Ovary (tissue), 10 donors: ENCODE measurements at regions of chr10 and their contacts with region 1.

Region 1: DNA sequence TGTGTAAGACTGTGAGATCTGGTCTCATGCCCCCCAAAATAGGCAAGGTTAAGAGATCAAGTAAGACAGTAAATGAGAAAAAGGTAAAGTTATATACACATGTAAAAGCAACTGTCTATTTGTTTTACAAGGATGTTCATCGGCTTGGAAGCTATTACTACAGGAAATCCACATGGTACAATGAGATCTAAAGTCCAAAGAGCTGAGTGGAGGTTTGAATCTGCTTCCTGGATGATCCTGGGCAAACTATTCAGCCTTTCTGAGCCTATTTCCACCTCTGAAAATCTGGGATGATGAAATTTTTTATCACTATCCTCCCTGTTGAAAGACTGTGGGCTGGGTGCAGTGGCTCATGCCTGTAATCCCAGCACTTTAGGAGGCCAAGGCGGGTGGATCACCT is 123.0 kb downstream of the IDE start:
- DNase-seq: no peak
- H3K4me3 ChIP-seq: no peak overlapping the region
- H3K27ac ChIP-seq: no peak overlapping the region
- H3K4me1 ChIP-seq: no peaks in the 10 kb centered on the region
- H3K27me3 ChIP-seq: no peaks in the 10 kb centered on the region
- CTCF ChIP-seq: no peak
- EP300 ChIP-seq: no peak
- POLR2A ChIP-seq: no peak

Region 2: DNA sequence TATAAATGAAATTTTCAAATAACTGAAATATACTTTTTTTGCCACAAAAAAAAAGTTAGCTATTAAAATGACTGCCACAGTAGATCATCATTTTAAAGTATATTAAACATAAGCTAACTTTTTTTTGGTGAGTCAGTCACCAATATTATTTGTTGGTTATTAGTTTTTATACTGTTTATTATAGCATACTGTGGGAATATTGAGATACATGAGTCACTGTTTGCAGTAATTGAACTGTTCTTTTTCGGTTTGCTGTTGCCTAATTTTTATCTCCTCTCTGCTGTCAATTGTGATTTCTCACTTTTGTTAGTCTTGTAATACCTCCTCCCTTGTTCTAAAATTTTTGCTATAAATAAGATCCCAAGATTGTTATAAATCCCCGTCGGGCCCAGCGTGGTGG is 481.6 kb before region 1 on chr10:
- intact Hi-C with region 1: loop called in 1 of 4 experiments (anchors 10 kb)
- DNase-seq: no peak
- H3K4me3 ChIP-seq: no peak overlapping the region
- H3K27ac ChIP-seq: no peak overlapping the region
- H3K4me1 ChIP-seq: no peaks in the 10 kb centered on the region
- H3K27me3 ChIP-seq: no peaks in the 10 kb centered on the region
- CTCF ChIP-seq: no peak
- EP300 ChIP-seq: no peak
- POLR2A ChIP-seq: no peak

Region 3: GRCh38 chr10:92381543-92381954 is 69.3 kb before region 1 on chr10:
- intact Hi-C with region 1: no loop called
- DNase-seq: no peak
- H3K4me3 ChIP-seq: no peak overlapping the region
- H3K27ac ChIP-seq: no peak overlapping the region
- H3K4me1 ChIP-seq: no peaks in the 10 kb centered on the region
- H3K27me3 ChIP-seq: no peaks in the 10 kb centered on the region
- CTCF ChIP-seq: no peak
- EP300 ChIP-seq: no peak
- POLR2A ChIP-seq: no peak

Region 4: GRCh38 chr10:92527716-92528115 is 76.8 kb after region 1 on chr10:
- intact Hi-C with region 1: no loop called
- DNase-seq: no peak
- H3K4me3 ChIP-seq: no peak overlapping the region
- H3K27ac ChIP-seq: no peak overlapping the region
- H3K4me1 ChIP-seq: no peaks in the 10 kb centered on the region
- H3K27me3 ChIP-seq: no peaks in the 10 kb centered on the region
- CTCF ChIP-seq: no peak
- EP300 ChIP-seq: no peak
- POLR2A ChIP-seq: no peak